B cell (primary cell): ENCODE measurements at regions of chr1 and their contacts with region 1.

Region 1: GRCh38 chr1:33472349-33472980 is at the start of gene ZSCAN20:
- DNase-seq: peak; percentile 86
- ATAC-seq: peak; percentile 98
- H3K4me3 ChIP-seq: peak within 1 kb of the TSS; percentile 1 to 69 (median 49)
- H3K4me3 Mint-ChIP-seq: peak within 1 kb of the TSS; percentile 88
- H3K27ac ChIP-seq: peak within 1 kb of the TSS; percentile 39 to 52
- H3K27ac Mint-ChIP-seq: peak within 1 kb of the TSS; percentile 71
- H3K4me1 ChIP-seq: peaks cover 8 to 20% of the 10 kb centered on the region in 2 donors
- H3K4me1 Mint-ChIP-seq: peaks cover 21% of the 10 kb centered on the region
- H3K27me3 ChIP-seq: no peaks in the 10 kb centered on the region
- H3K27me3 Mint-ChIP-seq: no peaks in the 10 kb centered on the region
- CTCF ChIP-seq: no peak
- total RNA-seq, gene ZSCAN20: 3.7 and 5.3 TPM in 2 replicates

Region 2: DNA sequence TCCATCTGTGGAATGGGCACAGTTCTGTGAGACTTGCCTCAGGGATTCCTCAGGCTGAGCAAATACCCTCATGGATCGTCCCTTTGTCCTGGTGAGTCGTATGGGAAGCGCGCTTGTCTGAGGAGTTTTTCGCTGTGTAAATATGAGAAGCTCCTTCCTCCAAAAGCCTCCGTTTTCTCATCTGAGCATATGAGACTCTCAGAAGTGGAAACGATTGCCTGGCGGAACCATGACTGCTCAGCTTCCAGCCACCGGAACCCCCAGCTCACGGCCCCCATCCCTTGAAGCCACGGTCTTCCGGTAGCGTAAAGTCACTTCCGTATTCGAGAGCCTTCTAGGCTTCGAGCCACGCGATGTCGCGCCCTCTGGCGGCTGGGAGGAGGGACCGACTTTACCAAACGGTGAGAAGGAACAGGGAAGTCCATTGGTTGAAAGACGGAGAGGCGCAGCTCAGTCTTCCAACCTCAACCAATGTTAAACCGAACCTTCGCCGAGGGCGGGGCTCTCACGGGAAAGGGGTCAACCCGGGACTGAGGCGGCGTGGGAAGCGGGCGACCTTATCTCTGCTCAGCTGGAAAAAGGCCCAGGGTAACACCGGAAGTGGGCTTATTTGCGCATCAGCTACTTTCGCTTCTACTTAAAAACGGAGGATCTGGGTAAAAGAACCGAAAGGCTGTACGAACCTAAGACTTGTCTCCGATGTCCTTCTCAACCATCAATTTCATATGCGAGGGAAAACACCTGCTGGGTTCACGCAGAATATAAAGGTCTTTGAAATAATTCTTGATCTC is 345.3 kb before region 1 on chr1:
- CTCF ChIA-PET with region 1: interaction called, 8 read pairs
- POLR2A ChIA-PET with region 1: no interaction called
- intact Hi-C with region 1: loop called (anchors 1 kb)
- DNase-seq: peak; percentile 99
- ATAC-seq: peak; percentile 97
- H3K4me3 ChIP-seq: peak overlapping the region; percentile 80 to 96 (median 88)
- H3K4me3 Mint-ChIP-seq: peak overlapping the region; percentile 93
- H3K27ac ChIP-seq: peak overlapping the region; percentile 82 to 83
- H3K27ac Mint-ChIP-seq: peak overlapping the region; percentile 95
- H3K4me1 ChIP-seq: peaks cover 13 to 25% of the 10 kb centered on the region in 2 donors
- H3K4me1 Mint-ChIP-seq: peaks cover 18% of the 10 kb centered on the region
- H3K27me3 ChIP-seq: no peaks in the 10 kb centered on the region
- H3K27me3 Mint-ChIP-seq: peaks cover 5% of the 10 kb centered on the region
- CTCF ChIP-seq: peak; percentile 86

Region 3: DNA sequence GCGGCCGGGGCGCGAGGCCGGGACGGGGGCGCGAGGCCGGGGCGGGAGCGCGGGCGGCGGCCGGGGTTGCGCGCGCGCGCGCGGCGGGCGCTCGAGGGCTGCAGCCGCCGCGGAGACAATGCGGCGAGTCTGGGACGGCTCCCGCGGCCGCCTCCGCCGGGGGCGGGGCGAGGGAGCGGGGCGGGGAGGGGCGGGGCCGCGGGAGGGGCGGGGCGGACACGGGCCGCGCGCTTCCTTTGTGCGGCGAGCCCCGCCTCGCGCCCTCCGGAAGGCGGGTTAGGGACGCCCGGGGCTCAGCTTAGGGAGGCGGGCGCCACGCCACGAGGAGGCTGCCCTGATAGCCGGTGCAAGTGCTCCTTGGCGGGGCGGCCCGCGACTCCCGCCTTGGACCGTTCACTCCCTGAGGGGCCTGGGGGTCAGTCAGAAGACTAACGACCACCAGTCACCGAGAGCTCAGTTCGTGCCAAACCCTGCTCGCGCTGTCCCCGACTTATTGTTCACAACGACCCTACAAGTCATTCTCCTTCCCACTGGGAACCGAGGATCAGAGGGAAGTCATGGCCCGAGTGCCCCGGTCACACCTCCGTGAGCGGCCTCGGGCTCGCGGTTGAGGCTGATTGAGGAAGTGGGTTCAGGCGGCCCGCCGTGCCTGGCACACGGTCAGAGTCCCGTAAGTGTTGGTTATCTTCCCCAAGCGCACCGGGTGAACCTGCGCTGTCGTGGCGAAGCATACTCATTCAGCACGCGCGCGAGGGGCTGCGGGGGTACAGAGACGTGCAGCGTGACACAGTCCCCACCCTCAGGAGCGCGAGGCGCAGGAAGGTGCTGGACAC is 122.5 kb before region 1 on chr1:
- CTCF ChIA-PET with region 1: no interaction called
- POLR2A ChIA-PET with region 1: interaction called, 3 read pairs
- intact Hi-C with region 1: loop called (anchors 1 kb)
- DNase-seq: peak; percentile 88
- ATAC-seq: peak; percentile 86
- H3K4me3 ChIP-seq: peak overlapping the region; percentile 45 to 76 (median 74)
- H3K4me3 Mint-ChIP-seq: peak overlapping the region; percentile 98
- H3K27ac ChIP-seq: peak overlapping the region; percentile 71 to 81
- H3K27ac Mint-ChIP-seq: peak overlapping the region; percentile 90
- H3K4me1 ChIP-seq: peaks cover 16 to 20% of the 10 kb centered on the region in 2 donors
- H3K4me1 Mint-ChIP-seq: peaks cover 36% of the 10 kb centered on the region
- H3K27me3 ChIP-seq: peaks cover 0 to 3% (median 0%) of the 10 kb centered on the region in 4 experiments
- H3K27me3 Mint-ChIP-seq: no peaks in the 10 kb centered on the region
- CTCF ChIP-seq: no peak

Region 4: DNA sequence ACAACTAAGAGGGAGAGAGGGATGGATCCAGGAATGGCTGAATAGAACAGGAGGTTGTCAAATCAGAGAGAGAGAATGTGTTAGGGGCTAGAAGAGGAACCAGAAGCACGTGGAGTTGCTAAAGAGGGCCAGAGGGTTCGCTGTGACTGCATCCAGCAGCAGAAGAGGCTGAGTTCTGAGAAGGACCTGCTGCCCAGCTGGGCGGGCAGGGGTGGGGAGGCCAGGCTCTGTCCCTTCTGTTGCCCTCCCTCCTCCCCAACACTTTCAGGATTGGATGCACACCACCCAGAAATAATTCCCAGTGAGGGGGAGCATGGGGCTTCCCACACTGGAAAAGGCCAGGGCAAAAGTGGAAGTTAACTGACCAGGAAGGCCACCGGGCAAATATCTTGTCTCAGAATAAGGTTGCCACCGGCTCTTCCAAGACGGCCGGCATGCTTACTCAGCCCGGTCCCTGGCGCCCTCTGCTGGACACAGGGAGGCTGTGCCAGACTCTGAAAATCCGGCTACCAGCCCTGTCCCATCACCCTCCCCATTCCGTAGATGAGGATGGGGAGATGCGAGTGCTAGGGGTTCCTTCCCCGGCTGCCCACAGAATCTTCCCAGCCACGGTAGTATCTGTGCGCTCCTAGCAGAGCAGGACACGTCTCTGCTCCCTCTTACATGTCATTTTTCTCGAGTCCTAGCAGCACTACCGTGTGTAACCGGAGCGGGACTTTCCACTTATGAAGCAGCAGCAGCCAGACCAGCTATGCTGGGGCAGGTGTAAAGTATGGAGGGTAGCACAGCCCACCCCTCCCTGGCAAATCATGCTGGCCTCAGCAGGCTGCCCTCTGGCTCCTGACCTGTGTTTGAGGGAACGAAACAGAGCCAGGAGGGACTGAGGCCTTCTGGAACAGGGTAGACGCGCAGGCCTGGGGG is 104.7 kb before region 1 on chr1:
- CTCF ChIA-PET with region 1: interaction called, 39 read pairs
- POLR2A ChIA-PET with region 1: no interaction called
- intact Hi-C with region 1: loop called (anchors 1 kb)
- DNase-seq: peak; percentile 85
- ATAC-seq: peak; percentile 94
- H3K4me3 ChIP-seq: no peak overlapping the region
- H3K4me3 Mint-ChIP-seq: no peak overlapping the region
- H3K27ac ChIP-seq: no peak overlapping the region
- H3K27ac Mint-ChIP-seq: no peak overlapping the region
- H3K4me1 ChIP-seq: peaks cover 4 to 5% of the 10 kb centered on the region in 2 donors
- H3K4me1 Mint-ChIP-seq: no peaks in the 10 kb centered on the region
- H3K27me3 ChIP-seq: peaks cover 0 to 10% (median 3%) of the 10 kb centered on the region in 4 experiments
- H3K27me3 Mint-ChIP-seq: peaks cover 18% of the 10 kb centered on the region
- CTCF ChIP-seq: peak; percentile 96

Region 5: DNA sequence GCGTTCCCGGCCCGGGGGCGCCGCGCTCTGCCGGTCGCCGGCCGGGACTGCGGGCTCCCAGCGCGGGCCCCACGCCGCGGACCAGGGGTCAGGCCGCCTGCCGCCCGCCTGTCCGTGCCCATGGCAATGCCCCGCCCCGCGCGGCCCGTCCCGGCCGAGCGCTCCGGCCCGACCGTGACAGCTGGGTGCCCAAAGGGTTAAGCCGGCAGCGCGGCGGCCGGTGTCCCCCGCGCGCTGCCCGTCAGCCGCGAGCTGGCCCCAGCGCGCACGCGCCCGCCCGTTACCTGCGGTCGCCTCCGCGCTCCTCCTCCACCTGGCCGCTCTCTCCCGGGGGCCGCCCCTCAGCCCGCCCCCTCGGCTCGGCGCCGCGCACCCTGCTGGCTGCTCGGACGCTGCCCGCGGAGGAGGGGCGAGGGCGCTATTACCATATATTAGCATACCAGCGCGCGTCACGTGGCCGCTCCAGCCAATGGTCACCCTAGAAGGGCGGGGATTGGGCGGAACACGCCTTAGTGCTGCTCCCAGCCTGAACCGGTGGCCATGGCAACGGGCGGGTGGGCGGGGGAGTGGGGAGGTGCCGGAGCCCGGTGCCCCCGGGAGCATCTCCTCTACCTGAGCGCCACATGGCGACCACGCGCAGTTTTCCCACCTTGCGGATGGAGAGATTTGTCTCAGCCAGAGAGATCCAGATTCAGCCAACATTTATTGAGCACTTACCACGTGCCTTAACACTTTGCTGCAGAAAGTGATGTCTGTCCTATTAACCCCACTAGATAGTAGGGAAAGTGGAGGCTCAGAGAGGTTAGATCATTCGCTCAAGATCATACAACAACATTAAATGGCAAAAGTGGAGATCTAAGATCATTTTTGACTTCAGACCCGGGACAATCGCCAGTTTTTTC is 41.5 kb before region 1 on chr1 and contains the start of gene PHC2:
- CTCF ChIA-PET with region 1: interaction called, 8 read pairs
- POLR2A ChIA-PET with region 1: interaction called, 3 read pairs
- intact Hi-C with region 1: loop called (anchors 1 kb)
- DNase-seq: peak; percentile 94
- ATAC-seq: peak; percentile 98
- H3K4me3 ChIP-seq: peak within 1 kb of the TSS in 3 of 5 experiments; percentile 43 to 61 (median 54)
- H3K4me3 Mint-ChIP-seq: peak within 1 kb of the TSS; percentile 83
- H3K27ac ChIP-seq: no peak within 1 kb of the TSS
- H3K27ac Mint-ChIP-seq: peak within 1 kb of the TSS; percentile 48
- H3K4me1 ChIP-seq: peaks cover 11 to 12% of the 10 kb centered on the region in 2 donors
- H3K4me1 Mint-ChIP-seq: peaks cover 5% of the 10 kb centered on the region
- H3K27me3 ChIP-seq: peaks cover 2 to 23% (median 12%) of the 10 kb centered on the region in 4 experiments
- H3K27me3 Mint-ChIP-seq: peaks cover 23% of the 10 kb centered on the region
- CTCF ChIP-seq: peak; percentile 19
- total RNA-seq, gene PHC2: 22.9 and 23.1 TPM in 2 replicates

Region 6: DNA sequence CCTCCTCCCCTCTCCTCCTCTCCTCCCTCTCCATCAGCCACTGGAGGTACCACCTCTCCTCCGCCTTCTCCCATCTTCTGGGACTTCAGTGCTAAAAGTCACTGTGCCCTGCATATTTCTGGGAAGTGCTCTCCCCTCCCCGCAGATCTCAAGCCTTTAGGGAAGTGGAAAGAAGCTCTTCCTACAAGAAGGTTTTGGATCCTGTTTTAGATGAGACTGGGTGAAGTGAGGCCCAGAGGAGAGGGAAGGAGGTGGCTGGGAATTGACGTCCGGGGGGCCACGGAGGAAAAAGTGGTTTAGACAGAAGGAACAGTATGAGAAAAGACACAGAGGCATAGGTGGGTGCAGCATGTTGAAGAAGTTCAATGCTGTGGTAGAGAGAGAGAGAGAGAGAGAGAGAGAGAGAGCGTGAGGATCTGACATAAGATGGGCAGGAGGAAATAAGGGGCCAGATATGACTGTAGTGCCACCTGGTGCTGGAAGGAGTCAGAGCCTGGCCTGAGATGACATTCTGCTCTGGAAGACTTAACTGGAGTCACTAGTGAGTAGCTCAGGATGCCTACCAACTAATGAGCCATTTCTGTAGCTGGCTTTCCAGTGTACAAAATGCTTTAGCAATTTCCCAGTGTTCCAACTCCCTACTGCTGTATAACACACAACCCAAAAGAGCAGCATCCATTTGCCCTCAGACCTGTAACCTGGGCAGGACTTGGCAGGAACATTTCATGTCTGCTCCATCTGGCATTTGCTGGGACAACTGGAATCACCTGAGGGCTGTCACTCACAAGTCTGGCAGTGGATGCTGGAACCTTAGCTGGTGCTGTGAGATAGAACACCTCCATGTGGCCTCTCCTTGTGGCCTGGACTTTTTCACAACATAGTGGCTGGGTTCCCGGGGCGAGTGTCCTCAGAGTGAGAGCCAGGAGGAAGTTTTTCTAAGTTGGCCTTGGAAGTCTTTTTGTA is 16.6 kb before region 1 on chr1:
- CTCF ChIA-PET with region 1: interaction called, 10 read pairs
- POLR2A ChIA-PET with region 1: interaction called, 3 read pairs
- intact Hi-C with region 1: loop called (anchors 1 kb)
- DNase-seq: peak; percentile 67
- ATAC-seq: peak; percentile 77
- H3K4me3 ChIP-seq: no peak overlapping the region
- H3K4me3 Mint-ChIP-seq: no peak overlapping the region
- H3K27ac ChIP-seq: no peak overlapping the region
- H3K27ac Mint-ChIP-seq: peak overlapping the region; percentile 7
- H3K4me1 ChIP-seq: peaks cover 19 to 25% of the 10 kb centered on the region in 2 donors
- H3K4me1 Mint-ChIP-seq: peaks cover 25% of the 10 kb centered on the region
- H3K27me3 ChIP-seq: no peaks in the 10 kb centered on the region
- H3K27me3 Mint-ChIP-seq: peaks cover 3% of the 10 kb centered on the region
- CTCF ChIP-seq: peak; percentile 44

Region 7: GRCh38 chr1:33460947-33461629 is 11.4 kb before region 1 on chr1:
- CTCF ChIA-PET with region 1: interaction called, 10 read pairs
- POLR2A ChIA-PET with region 1: interaction called, 3 read pairs
- intact Hi-C with region 1: loop called (anchors 1 kb)
- DNase-seq: peak; percentile 80
- ATAC-seq: peak; percentile 93
- H3K4me3 ChIP-seq: peak overlapping the region in 3 of 5 experiments; percentile 10 to 25 (median 21)
- H3K4me3 Mint-ChIP-seq: peak overlapping the region; percentile 80
- H3K27ac ChIP-seq: peak overlapping the region; percentile 56 to 64
- H3K27ac Mint-ChIP-seq: peak overlapping the region; percentile 87
- H3K4me1 ChIP-seq: peaks cover 38 to 43% of the 10 kb centered on the region in 2 donors
- H3K4me1 Mint-ChIP-seq: peaks cover 44% of the 10 kb centered on the region
- H3K27me3 ChIP-seq: no peaks in the 10 kb centered on the region
- H3K27me3 Mint-ChIP-seq: no peaks in the 10 kb centered on the region
- CTCF ChIP-seq: no peak